Prostate gland (tissue), 2 donors: ENCODE measurements at regions of chr15 and their contacts with region 1.

Region 1: GRCh38 chr15:49769225-49769624 is 148.4 kb downstream of the DTWD1 start:
- DNase-seq: no peak
- H3K4me3 ChIP-seq: no peak overlapping the region
- H3K27ac ChIP-seq: peak overlapping the region in 1 of 2 donors; percentile 20
- H3K4me1 ChIP-seq: no peaks in the 10 kb centered on the region
- H3K27me3 ChIP-seq: no peaks in the 10 kb centered on the region
- CTCF ChIP-seq: no peak
- POLR2A ChIP-seq: no peak

Region 2: DNA sequence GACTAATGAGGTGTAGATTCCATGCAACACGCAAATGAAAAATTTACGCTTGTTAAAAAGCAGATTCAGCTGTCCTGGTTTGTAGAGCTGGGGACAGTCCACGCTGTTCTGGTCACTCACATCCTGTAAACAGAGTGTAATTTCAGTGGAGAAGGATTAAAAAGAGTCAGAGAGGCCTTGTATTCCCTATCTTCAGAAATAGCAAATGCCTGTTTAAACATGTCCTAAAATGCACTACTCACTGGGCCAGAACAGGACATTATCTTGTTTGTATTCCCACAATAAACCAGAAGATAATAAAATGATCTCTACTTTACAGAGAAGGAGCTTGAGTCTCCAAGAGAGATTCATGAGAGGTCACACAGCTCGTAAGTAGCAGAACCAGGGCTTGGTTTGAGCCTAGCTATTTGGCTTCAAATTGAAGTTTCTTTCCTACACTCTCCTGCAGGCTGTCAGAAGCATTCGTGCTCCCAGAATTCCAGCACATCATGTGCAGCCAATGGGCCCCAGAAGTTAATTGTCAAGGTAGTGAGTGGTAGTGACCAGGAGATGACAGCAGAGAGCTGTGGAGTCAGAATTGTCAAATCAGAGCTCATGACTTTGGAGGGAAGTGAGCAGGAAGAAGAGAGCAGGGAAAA is 107.3 kb after region 1 on chr15:
- intact Hi-C with region 1: loop called (anchors 10 kb)
- DNase-seq: peak; percentile 6
- H3K4me3 ChIP-seq: peak overlapping the region in 1 of 2 donors; percentile 0
- H3K27ac ChIP-seq: peak overlapping the region; percentile 65 to 69
- H3K4me1 ChIP-seq: peaks cover 7% of the 10 kb centered on the region
- H3K27me3 ChIP-seq: no peaks in the 10 kb centered on the region
- CTCF ChIP-seq: peak in 2 of 4 experiments; percentile 16 to 42
- POLR2A ChIP-seq: no peak

Region 3: GRCh38 chr15:50003786-50004334 is 234.6 kb after region 1 on chr15:
- intact Hi-C with region 1: no loop called
- DNase-seq: peak; percentile 52
- H3K4me3 ChIP-seq: no peak overlapping the region
- H3K27ac ChIP-seq: peak overlapping the region; percentile 2 to 19
- H3K4me1 ChIP-seq: no peaks in the 10 kb centered on the region
- H3K27me3 ChIP-seq: no peaks in the 10 kb centered on the region
- CTCF ChIP-seq: peak in 3 of 4 experiments; percentile 46 to 56 (median 55)
- POLR2A ChIP-seq: no peak